Activated T-helper 1 cell treated with anti-CD3 and anti-CD28 coated beads, Interleukin-12 subunit alpha, Interleukin-12 subunit beta, Interleukin-2, Interleukin-4 antibody, amounts not matched to agents 30 ng/mL and 10 ng/mL and 1 ng/mL, durations not matched to agents 14 hours and 24 hours and 36 hours (primary cell): ENCODE measurements at regions of chr20 and their contacts with region 1.

Region 1: GRCh38 chr20:62500237-62500864 is 24.6 kb upstream of the GATA5 start:
- DNase-seq: peak; percentile 70
- H3K4me3 Mint-ChIP-seq: no peak overlapping the region
- H3K27ac Mint-ChIP-seq: peak overlapping the region; percentile 89
- H3K4me1 Mint-ChIP-seq: peaks cover 26% of the 10 kb centered on the region
- H3K27me3 Mint-ChIP-seq: no peaks in the 10 kb centered on the region

Region 2: GRCh38 chr20:62182613-62183425 is 317.5 kb before region 1 on chr20 and contains the start of gene MTG2:
- intact Hi-C with region 1: loop called (anchors 5 kb)
- DNase-seq: peak; percentile 95
- H3K4me3 Mint-ChIP-seq: peak within 1 kb of the TSS; percentile 92
- H3K27ac Mint-ChIP-seq: peak within 1 kb of the TSS; percentile 93
- H3K4me1 Mint-ChIP-seq: peaks cover 39% of the 10 kb centered on the region
- H3K27me3 Mint-ChIP-seq: no peaks in the 10 kb centered on the region
- total RNA-seq, gene MTG2: 45.4 and 46.3 TPM in 2 replicates

Region 3: GRCh38 chr20:62603021-62603906 is 102.9 kb after region 1 on chr20:
- intact Hi-C with region 1: loop called (anchors 5 kb)
- DNase-seq: peak; percentile 25
- H3K4me3 Mint-ChIP-seq: peak overlapping the region; percentile 78
- H3K27ac Mint-ChIP-seq: peak overlapping the region; percentile 79
- H3K4me1 Mint-ChIP-seq: peaks cover 48% of the 10 kb centered on the region
- H3K27me3 Mint-ChIP-seq: peaks cover 21% of the 10 kb centered on the region

Region 4: GRCh38 chr20:62642040-62642665 is 141.8 kb after region 1 on chr20 and contains the start of gene SLCO4A1:
- intact Hi-C with region 1: loop called (anchors 1 kb)
- DNase-seq: peak; percentile 90
- H3K4me3 Mint-ChIP-seq: peak within 1 kb of the TSS; percentile 85
- H3K27ac Mint-ChIP-seq: peak within 1 kb of the TSS; percentile 78
- H3K4me1 Mint-ChIP-seq: peaks cover 16% of the 10 kb centered on the region
- H3K27me3 Mint-ChIP-seq: peaks cover 16% of the 10 kb centered on the region
- total RNA-seq, gene SLCO4A1: 47.6 and 49.8 TPM in 2 replicates

Region 5: GRCh38 chr20:62808211-62808865 is 308.0 kb after region 1 on chr20:
- intact Hi-C with region 1: loop called (anchors 1 kb)
- DNase-seq: peak; percentile 59
- H3K4me3 Mint-ChIP-seq: peak overlapping the region; percentile 65
- H3K27ac Mint-ChIP-seq: no peak overlapping the region
- H3K4me1 Mint-ChIP-seq: peaks cover 21% of the 10 kb centered on the region
- H3K27me3 Mint-ChIP-seq: no peaks in the 10 kb centered on the region

Region 6: DNA sequence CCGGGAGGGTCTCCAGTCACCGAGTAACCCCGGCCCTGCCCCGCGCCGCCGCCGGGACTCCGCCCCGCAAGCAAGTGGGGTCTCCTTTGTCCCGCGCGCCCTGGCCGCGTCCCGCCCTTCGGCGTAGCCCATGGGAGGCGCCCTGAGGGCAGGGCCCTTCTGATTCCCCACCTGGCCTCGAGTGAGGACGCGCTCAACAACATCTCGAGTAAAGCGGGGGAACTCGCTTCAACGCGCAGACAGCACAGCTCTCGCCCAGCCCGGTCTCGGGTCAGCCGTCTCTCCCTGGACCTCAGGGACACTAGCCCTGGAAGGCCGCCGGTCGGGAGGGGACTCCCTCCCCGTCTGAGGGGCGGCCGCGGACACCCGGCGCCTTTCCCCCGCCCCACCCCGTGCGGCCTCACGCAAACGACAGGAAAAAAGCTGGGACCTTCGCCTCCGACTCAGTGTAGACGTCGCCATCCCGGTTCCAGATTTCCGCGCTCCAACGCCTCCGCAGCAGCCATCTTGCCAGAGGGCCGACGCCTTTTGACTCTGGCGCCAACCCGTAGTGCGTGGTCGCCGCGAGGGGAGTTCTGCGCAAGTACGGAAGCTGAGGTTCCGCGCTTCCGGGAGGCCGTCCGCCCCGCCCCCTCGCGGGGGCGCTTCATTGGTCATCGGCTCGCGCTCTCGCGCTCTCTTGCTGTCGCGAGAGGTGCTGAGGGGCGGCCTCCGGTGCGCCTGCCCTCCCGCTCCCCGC is 437.2 kb after region 1 on chr20:
- intact Hi-C with region 1: loop called (anchors 5 kb)
- DNase-seq: peak; percentile 96
- H3K4me3 Mint-ChIP-seq: peak overlapping the region; percentile 88
- H3K27ac Mint-ChIP-seq: peak overlapping the region; percentile 98
- H3K4me1 Mint-ChIP-seq: peaks cover 41% of the 10 kb centered on the region
- H3K27me3 Mint-ChIP-seq: no peaks in the 10 kb centered on the region